HEK293 (cell line): ENCODE measurements at regions of chr15 and their contacts with region 1.

Region 1: DNA sequence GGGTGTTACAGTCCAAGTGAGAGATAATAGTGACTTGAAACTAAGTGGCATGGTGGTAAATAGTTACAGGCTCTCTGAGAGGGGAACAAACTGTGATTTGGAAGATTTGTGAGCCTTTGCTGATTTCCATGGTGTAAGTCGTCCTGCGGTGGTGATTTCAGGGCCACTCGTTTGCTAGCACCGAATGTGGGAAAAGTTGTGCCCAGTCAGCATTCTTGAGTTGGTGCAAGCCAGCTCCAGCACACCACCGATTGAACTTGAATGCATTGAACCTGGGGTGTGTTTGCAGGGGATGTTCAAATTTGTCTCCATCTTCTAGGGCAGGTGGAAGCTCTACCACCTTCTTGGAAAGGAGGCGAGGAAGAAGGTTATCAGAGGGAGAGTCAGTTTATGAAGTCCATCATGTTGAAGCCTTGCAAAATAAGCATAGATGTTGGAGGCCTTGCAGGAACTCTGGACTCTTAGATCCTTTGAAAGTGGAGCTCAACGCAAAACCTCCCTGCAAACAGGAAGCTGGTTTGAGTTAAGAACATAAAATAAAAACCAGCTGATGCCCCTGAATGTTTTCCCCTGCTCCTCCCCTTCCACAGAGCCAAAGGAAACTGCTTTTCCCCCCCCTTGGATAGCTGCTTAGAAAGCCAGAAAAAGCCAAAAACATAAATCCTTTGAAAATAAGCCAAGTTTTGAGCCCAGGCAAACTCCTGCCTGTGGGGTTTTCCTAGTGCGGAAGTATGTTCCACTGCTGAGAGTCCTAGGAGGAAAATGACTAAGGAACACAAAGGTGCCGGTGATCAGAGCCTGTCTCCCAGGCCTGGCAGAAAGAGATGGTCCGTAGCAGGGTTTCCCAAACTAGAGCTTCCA is 21.9 kb downstream of the MAPKBP1 start:
- H3K4me3 ChIP-seq: no peak overlapping the region
- H3K27ac ChIP-seq: no peak overlapping the region
- H3K4me1 ChIP-seq: no peaks in the 10 kb centered on the region
- CTCF ChIP-seq: no peak

Region 2: DNA sequence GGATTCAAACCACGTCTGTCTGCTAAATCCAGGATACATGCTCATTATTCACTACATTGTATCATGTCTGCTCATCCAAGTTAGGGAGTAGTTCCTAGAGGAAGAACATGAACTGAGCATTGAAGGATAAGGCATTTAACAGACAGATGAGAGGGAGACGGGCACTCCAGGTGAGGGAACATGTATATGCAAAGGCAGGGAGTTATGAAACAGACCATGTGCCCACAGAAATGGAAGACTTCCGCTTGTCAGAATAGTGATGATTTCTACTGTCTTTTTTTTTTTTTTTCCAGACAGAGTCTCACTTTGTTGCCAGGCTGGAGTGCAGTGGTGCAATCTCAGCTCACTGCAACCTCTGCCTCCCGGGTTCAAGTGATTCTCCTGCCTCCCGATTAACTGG is 388.9 kb before region 1 on chr15:
- CTCF ChIA-PET with region 1: no interaction called
- POLR2A ChIA-PET with region 1: no interaction called
- H3K4me3 ChIP-seq: no peak overlapping the region
- H3K27ac ChIP-seq: no peak overlapping the region
- H3K4me1 ChIP-seq: no peaks in the 10 kb centered on the region
- CTCF ChIP-seq: no peak

Region 3: GRCh38 chr15:41550066-41550775 is 246.0 kb before region 1 on chr15:
- CTCF ChIA-PET with region 1: no interaction called
- POLR2A ChIA-PET with region 1: interaction called, 10 read pairs
- H3K4me3 ChIP-seq: no peak overlapping the region
- H3K27ac ChIP-seq: no peak overlapping the region
- H3K4me1 ChIP-seq: no peaks in the 10 kb centered on the region
- CTCF ChIP-seq: no peak